GM23248 (cell line): ENCODE measurements at regions of chr20 and their contacts with region 1.

Region 1: GRCh38 chr20:53547664-53548239 is 45.9 kb downstream of the ZNF217 start:
- DNase-seq: peak; percentile 86
- H3K4me3 ChIP-seq: no peak overlapping the region
- H3K27ac ChIP-seq: no peak overlapping the region
- H3K4me1 ChIP-seq: peaks cover 4% of the 10 kb centered on the region; the same call in 1 of the 2 replicates
- H3K27me3 ChIP-seq: no peaks in the 10 kb centered on the region

Region 2: GRCh38 chr20:52312132-52312729 is 1235.5 kb before region 1 on chr20:
- in situ Hi-C with region 1: loop called (anchors 10 kb)
- DNase-seq: peak; percentile 79
- H3K4me3 ChIP-seq: no peak overlapping the region
- H3K27ac ChIP-seq: no peak overlapping the region
- H3K4me1 ChIP-seq: 0 out of 2 replicates have a peak, but pooled peaks cover 4% of the 10 kb centered on the region
- H3K27me3 ChIP-seq: no peaks in the 10 kb centered on the region

Region 3: GRCh38 chr20:53718142-53719021 is 170.6 kb after region 1 on chr20:
- in situ Hi-C with region 1: no loop called
- DNase-seq: no peak
- H3K4me3 ChIP-seq: no peak overlapping the region
- H3K27ac ChIP-seq: no peak overlapping the region
- H3K4me1 ChIP-seq: peaks cover 9% of the 10 kb centered on the region; the same call in 1 of the 2 replicates
- H3K27me3 ChIP-seq: no peaks in the 10 kb centered on the region